Activated CD4-positive, alpha-beta memory T cell treated with anti-CD3 and anti-CD28 coated beads, Interleukin-2, amount 10 ng/mL, durations not matched to agents 7 days and 5 days (primary cell): ENCODE measurements at regions of chr10 and their contacts with region 1.

Region 1: DNA sequence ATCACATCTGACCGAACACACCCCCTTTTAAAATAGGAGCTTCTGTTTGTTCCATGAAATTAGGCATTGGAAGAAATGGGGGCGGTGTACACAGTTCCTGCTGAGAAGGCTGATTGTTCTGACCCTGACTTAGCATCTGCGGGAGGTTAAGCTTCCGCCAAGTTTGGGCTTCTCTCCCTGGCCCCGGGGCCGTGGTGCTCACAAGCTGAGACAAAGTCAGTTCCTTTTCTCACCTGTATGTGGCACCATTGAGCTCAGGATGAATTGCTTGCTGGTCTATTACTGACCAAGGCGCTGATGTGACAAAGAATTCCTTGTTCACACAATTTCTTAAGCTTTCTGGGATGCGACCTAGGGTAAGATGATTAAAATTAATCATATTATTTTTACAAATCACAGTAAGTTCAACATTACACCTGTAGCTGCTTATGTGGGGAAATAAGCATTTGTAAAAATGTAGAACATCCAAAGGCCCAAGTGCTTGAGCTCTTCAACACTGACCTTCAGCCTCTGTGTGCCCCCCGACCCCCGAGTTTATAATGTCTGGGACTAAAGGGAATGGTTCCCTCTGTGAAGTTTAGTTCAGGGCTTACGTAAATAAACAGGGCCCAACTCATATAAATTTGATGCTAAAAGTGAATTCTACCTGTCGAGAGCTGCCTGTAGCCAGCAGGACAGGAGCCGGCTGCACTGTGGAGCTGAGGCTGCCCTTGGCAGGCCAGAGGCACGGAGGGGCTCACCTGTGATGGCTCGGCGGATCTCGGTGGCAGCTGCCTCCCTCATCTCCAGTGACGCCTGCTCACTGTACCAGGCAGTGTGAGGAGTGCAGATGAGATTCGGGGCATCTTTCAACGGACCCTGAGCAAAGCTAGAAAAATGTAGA is 50.8 kb downstream of the ZRANB1 start:
- DNase-seq: peak; percentile 24
- H3K4me3 Mint-ChIP-seq: no peak overlapping the region
- H3K27ac Mint-ChIP-seq: no peak overlapping the region
- H3K4me1 Mint-ChIP-seq: no peaks in the 10 kb centered on the region
- H3K27me3 Mint-ChIP-seq: no peaks in the 10 kb centered on the region

Region 2: DNA sequence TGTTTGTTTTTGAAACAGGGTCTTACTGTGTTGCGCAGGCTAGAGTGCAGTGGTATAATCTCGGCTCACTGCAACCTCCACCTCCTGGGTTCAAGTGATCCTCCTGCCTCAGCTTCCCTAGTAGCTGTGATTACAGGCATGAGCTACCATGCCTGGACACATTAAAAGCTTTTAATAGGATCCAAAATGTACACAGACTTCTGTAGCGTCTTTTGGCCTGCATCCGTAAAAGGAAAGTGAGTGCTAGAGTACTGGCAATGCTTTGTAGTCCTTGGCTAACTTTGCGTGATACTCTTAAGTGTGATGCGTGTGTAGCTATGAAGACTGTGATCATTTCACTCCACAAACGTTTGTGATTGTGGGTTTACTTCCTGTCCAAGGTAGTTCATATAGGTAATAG is 37.5 kb before region 1 on chr10:
- CTCF ChIA-PET with region 1: no interaction called
- POLR2A ChIA-PET with region 1: no interaction called
- DNase-seq: no peak
- H3K4me3 Mint-ChIP-seq: no peak overlapping the region
- H3K27ac Mint-ChIP-seq: no peak overlapping the region
- H3K4me1 Mint-ChIP-seq: peaks cover 16% of the 10 kb centered on the region
- H3K27me3 Mint-ChIP-seq: no peaks in the 10 kb centered on the region

Region 3: GRCh38 chr10:124975977-124976514 is 16.7 kb before region 1 on chr10:
- CTCF ChIA-PET with region 1: interaction called, 13 read pairs
- POLR2A ChIA-PET with region 1: no interaction called
- DNase-seq: no peak
- H3K4me3 Mint-ChIP-seq: no peak overlapping the region
- H3K27ac Mint-ChIP-seq: no peak overlapping the region
- H3K4me1 Mint-ChIP-seq: peaks cover 22% of the 10 kb centered on the region
- H3K27me3 Mint-ChIP-seq: no peaks in the 10 kb centered on the region